K562 (cell line): ENCODE measurements at regions of chr7 and their contacts with region 1.

Region 1: DNA sequence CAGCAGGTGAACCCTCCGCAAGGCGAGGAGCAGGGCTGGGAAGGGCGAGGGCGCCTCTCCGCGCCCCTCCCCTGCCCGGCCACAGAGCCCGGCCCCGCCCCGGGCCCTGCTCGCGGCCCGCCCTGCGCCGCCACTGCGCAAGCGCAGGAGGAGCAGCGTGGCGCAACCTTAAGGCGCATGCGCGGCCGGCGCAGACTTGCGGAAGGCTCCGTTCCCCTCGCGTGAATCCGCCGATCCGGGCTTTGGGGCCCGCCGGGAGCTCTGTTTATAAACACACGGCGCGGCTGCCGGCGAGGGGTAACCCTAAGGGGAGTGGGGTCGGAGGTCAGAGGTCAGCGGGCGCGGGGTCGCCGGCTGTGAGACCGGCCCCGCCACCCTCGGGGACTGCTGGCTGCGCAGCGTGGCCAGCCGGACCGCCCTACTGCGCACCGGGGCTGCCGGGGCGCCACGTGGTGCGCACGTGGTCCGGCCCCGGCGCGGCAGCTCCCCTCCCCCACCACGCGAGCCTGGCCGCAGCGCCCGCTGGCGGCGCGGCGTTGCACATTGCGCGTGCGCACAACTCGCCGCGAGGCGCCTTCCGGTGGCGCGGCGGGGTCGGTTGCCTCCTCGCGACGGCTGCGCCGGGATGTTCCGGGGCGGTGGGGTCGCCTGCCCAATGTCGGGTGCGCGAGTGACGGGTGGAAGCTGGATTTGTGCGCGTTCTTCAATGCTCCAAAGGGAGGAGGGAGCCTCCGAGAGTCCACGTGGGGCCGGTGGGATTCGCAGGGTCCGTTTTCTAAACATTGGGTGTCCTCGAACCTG is 40.2 kb upstream of the FOXK1 start:
- DNase-seq: peak; percentile 96 to 99 (median 98)
- ATAC-seq: peak; percentile 95
- H3K4me3 ChIP-seq: peak overlapping the region; percentile 69
- H3K27ac ChIP-seq: peak overlapping the region; percentile 98
- H3K4me1 ChIP-seq: peaks cover 9 to 29% of the 10 kb centered on the region in 2 experiments; a peak in 4 of 5 replicates
- H3K27me3 ChIP-seq: no peaks in the 10 kb centered on the region
- CTCF ChIP-seq: peak; percentile 38 to 75 (median 52); a peak in 5 of 6 replicates
- EP300 ChIP-seq: peak; percentile 53; the same call in 1 of the 2 replicates
- POLR2A ChIP-seq: peak; percentile 95
- RAD21 ChIP-seq: peak; percentile 29 to 40

Region 2: GRCh38 chr7:4428526-4428925 is 213.3 kb before region 1 on chr7:
- CTCF ChIA-PET with region 1: no interaction called
- POLR2A ChIA-PET with region 1: no interaction called
- in situ Hi-C with region 1: no loop called
- intact Hi-C with region 1: no loop called
- DNase-seq: no peak
- ATAC-seq: no peak
- H3K4me3 ChIP-seq: no peak overlapping the region
- H3K27ac ChIP-seq: no peak overlapping the region
- H3K4me1 ChIP-seq: no peaks in the 10 kb centered on the region
- H3K27me3 ChIP-seq: no peaks in the 10 kb centered on the region; a peak in 1 of 5 replicates
- CTCF ChIP-seq: no peak
- EP300 ChIP-seq: no peak
- POLR2A ChIP-seq: no peak
- RAD21 ChIP-seq: no peak

Region 3: GRCh38 chr7:4621401-4622145 is 20.3 kb before region 1 on chr7:
- CTCF ChIA-PET with region 1: no interaction called
- POLR2A ChIA-PET with region 1: no interaction called
- in situ Hi-C with region 1: no loop called
- intact Hi-C with region 1: no loop called
- DNase-seq: no peak
- ATAC-seq: no peak
- H3K4me3 ChIP-seq: no peak overlapping the region
- H3K27ac ChIP-seq: peak overlapping the region; percentile 83; the same call in 2 of the 3 replicates
- H3K4me1 ChIP-seq: peaks cover 23 to 27% of the 10 kb centered on the region in 2 experiments
- H3K27me3 ChIP-seq: no peaks in the 10 kb centered on the region
- CTCF ChIP-seq: no peak
- EP300 ChIP-seq: no peak
- POLR2A ChIP-seq: no peak
- RAD21 ChIP-seq: no peak

Region 4: GRCh38 chr7:4631664-4632171 is 10.1 kb before region 1 on chr7:
- CTCF ChIA-PET with region 1: no interaction called
- POLR2A ChIA-PET with region 1: no interaction called
- in situ Hi-C with region 1: no loop called
- intact Hi-C with region 1: no loop called
- DNase-seq: peak; percentile 46 to 84 (median 62)
- ATAC-seq: peak; percentile 89
- H3K4me3 ChIP-seq: no peak overlapping the region
- H3K27ac ChIP-seq: no peak overlapping the region
- H3K4me1 ChIP-seq: peaks cover 0 to 9% of the 10 kb centered on the region in 2 experiments; a peak in 3 of 5 replicates
- H3K27me3 ChIP-seq: no peaks in the 10 kb centered on the region; a peak in 1 of 5 replicates
- CTCF ChIP-seq: peak; percentile 82 to 92 (median 89)
- EP300 ChIP-seq: no peak
- POLR2A ChIP-seq: no peak
- RAD21 ChIP-seq: peak; percentile 90 to 94

Region 5: GRCh38 chr7:4681886-4682620 is 40.2 kb after region 1 on chr7 and contains the start of gene FOXK1:
- CTCF ChIA-PET with region 1: interaction called, 4 read pairs
- POLR2A ChIA-PET with region 1: interaction called, 21 read pairs
- in situ Hi-C with region 1: no loop called
- intact Hi-C with region 1: loop called (anchors 1 kb)
- DNase-seq: peak; percentile 83 to 90 (median 88)
- ATAC-seq: peak; percentile 72
- H3K4me3 ChIP-seq: peak within 1 kb of the TSS; percentile 65
- H3K27ac ChIP-seq: peak within 1 kb of the TSS; percentile 78
- H3K4me1 ChIP-seq: peaks cover 14 to 38% of the 10 kb centered on the region in 2 experiments; a peak in 4 of 5 replicates
- H3K27me3 ChIP-seq: peaks cover 0 to 10% of the 10 kb centered on the region in 2 experiments; a peak in 1 of 5 replicates
- CTCF ChIP-seq: 0 out of 6 replicates have a peak, but pooled peaks of 1 of the 3 experiments have one; percentile 7
- EP300 ChIP-seq: no peak
- POLR2A ChIP-seq: no peak
- RAD21 ChIP-seq: no peak
- polyA plus RNA-seq, gene FOXK1: 0.32 to 0.34 TPM

Region 6: GRCh38 chr7:4738711-4739527 is 97.1 kb after region 1 on chr7:
- CTCF ChIA-PET with region 1: no interaction called
- POLR2A ChIA-PET with region 1: no interaction called
- in situ Hi-C with region 1: no loop called
- intact Hi-C with region 1: loop called (anchors 5 kb)
- DNase-seq: peak; percentile 90 to 92 (median 92)
- ATAC-seq: peak; percentile 90
- H3K4me3 ChIP-seq: peak overlapping the region; percentile 26
- H3K27ac ChIP-seq: peak overlapping the region; percentile 94
- H3K4me1 ChIP-seq: peaks cover 20 to 35% of the 10 kb centered on the region in 2 experiments
- H3K27me3 ChIP-seq: no peaks in the 10 kb centered on the region
- CTCF ChIP-seq: peak; percentile 15 to 32 (median 17); a peak in 3 of 6 replicates
- EP300 ChIP-seq: peak; percentile 47; the same call in 1 of the 2 replicates
- POLR2A ChIP-seq: peak; percentile 54
- RAD21 ChIP-seq: peak in 1 of 2 experiments; percentile 37; a peak in 2 of 4 replicates

Region 7: GRCh38 chr7:4753711-4754432 is 112.0 kb after region 1 on chr7:
- CTCF ChIA-PET with region 1: no interaction called
- POLR2A ChIA-PET with region 1: interaction called, 3 read pairs
- in situ Hi-C with region 1: no loop called
- intact Hi-C with region 1: loop called (anchors 2 kb)
- DNase-seq: peak; percentile 80 to 84 (median 81)
- ATAC-seq: peak; percentile 99
- H3K4me3 ChIP-seq: no peak overlapping the region
- H3K27ac ChIP-seq: no peak overlapping the region
- H3K4me1 ChIP-seq: peaks cover 0 to 24% of the 10 kb centered on the region in 2 experiments; a peak in 2 of 5 replicates
- H3K27me3 ChIP-seq: no peaks in the 10 kb centered on the region
- CTCF ChIP-seq: peak; percentile 88 to 97 (median 89)
- EP300 ChIP-seq: no peak
- POLR2A ChIP-seq: no peak
- RAD21 ChIP-seq: peak; percentile 58 to 87